ENCODE measurements at regions of chr1 and their contacts with region 1.

Region 1: DNA sequence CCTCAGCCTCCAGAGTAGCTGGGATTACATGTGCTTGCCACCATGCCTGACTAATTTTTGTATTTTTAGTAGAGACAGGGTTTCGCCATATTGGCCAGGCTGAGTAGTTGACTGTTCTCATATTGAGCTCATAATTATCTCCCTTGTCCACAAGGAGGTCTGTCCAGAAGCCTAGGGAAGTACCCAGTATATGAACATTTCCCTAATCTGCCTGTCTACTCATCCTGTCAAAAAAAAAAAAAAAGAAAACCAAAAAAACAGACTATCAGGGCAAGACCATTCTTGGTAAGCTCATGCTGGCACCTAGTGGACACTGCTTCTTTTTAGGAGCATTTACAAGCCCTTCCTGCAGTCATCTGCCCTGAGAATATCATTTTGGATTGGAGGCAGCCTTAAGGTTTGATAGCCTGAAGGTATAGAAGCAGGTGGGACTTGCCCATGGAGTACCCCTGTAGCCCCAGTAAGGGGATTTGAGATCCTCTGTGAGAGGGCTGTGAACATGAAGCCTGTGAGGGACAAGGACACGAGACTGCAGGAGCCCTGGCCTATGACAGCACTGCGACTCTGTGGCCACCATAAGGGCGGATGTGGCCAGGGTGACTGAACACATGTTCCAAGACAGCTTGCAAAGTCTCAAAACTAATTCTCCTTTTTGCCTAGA is 10.8 kb upstream of the DUSP12 start:
- DNase-seq: peak; percentile 88
- ATAC-seq: peak; percentile 69
- H3K4me3 ChIP-seq: no peak overlapping the region
- H3K27ac ChIP-seq: no peak overlapping the region
- H3K4me1 ChIP-seq: peaks cover 5% of the 10 kb centered on the region
- H3K27me3 ChIP-seq: no peaks in the 10 kb centered on the region
- CTCF ChIP-seq: peak; percentile 77
- POLR2A ChIP-seq: no peak
- RAD21 ChIP-seq: peak; percentile 89

Region 2: GRCh38 chr1:161486806-161487741 is 251.7 kb before region 1 on chr1:
- CTCF ChIA-PET with region 1: interaction called, 5 read pairs
- POLR2A ChIA-PET with region 1: no interaction called
- dilution Hi-C with region 1: no loop called
- in situ Hi-C with region 1: loop called (anchors 10 kb)
- intact Hi-C with region 1: loop called (anchors 1 kb)
- DNase-seq: peak; percentile 74
- ATAC-seq: peak; percentile 70
- H3K4me3 ChIP-seq: peak overlapping the region; percentile 37; the same call in 1 of the 2 replicates
- H3K27ac ChIP-seq: no peak overlapping the region
- H3K4me1 ChIP-seq: peaks cover 2% of the 10 kb centered on the region; the same call in 1 of the 2 replicates
- H3K27me3 ChIP-seq: peaks cover 22% of the 10 kb centered on the region
- CTCF ChIP-seq: peak; percentile 77
- POLR2A ChIP-seq: no peak
- RAD21 ChIP-seq: peak; percentile 68

Region 3: DNA sequence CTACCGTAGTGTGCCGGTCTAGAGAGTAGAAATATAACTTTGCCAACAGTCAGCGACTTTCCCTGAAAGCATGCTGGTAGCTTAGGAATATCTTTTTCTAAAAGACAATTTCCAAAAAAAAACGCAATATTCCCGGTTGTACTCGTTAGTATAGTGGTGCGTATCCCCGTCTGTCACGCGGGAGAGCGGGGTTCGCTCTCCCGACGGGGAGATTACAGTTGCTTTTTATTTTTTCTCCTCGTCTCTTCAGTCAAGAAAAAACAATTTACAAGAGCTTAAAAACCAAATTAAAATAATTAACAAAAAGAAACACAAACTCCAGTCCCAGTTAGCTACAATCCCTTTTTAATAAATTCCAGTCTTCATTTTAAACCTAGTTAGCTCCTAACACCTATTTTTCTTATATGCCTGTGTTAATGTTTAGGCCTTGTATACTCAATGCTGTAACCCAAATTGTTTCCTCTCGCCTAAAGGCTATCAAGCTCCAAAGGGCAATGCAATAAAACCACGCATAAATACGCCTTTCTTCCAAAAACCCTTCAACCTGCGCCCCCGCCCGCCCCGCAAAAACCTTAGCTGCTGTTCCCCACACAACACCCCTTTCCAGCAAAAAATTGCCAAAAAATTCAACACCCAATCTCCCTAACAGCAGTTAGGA is 206.6 kb before region 1 on chr1:
- CTCF ChIA-PET with region 1: interaction called, 10 read pairs
- POLR2A ChIA-PET with region 1: no interaction called
- dilution Hi-C with region 1: no loop called
- in situ Hi-C with region 1: no loop called
- intact Hi-C with region 1: no loop called
- DNase-seq: peak; percentile 41
- ATAC-seq: no peak
- H3K4me3 ChIP-seq: peak overlapping the region; percentile 14; the same call in 1 of the 2 replicates
- H3K27ac ChIP-seq: no peak overlapping the region
- H3K4me1 ChIP-seq: no peaks in the 10 kb centered on the region
- H3K27me3 ChIP-seq: no peaks in the 10 kb centered on the region
- CTCF ChIP-seq: no peak
- POLR2A ChIP-seq: no peak
- RAD21 ChIP-seq: no peak

Region 4: DNA sequence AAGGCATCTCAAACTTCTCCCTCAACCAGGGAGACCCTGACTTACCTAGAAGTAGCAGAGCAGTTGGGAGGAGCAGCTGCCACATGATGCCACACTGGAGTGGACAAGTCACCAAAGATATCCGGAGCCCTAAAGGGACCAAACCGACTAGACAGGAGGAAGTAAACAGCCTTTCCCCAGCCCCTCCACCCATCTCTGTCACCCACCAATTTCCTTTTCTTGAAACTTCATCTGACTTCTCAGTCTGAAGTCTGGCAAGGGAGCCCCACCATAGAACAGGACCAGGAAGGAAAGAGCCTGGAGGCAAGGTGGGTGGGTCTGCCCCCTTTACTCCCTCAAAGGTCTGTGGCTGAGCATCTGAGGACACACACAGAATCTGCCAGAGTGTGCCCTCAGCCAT is 189.1 kb before region 1 on chr1 and contains the start of gene FCGR3A:
- CTCF ChIA-PET with region 1: no interaction called
- POLR2A ChIA-PET with region 1: no interaction called
- dilution Hi-C with region 1: no loop called
- in situ Hi-C with region 1: loop called (anchors 10 kb)
- intact Hi-C with region 1: no loop called
- DNase-seq: no peak
- ATAC-seq: no peak
- H3K4me3 ChIP-seq: no peak within 1 kb of the TSS
- H3K27ac ChIP-seq: no peak within 1 kb of the TSS
- H3K4me1 ChIP-seq: no peaks in the 10 kb centered on the region
- H3K27me3 ChIP-seq: peaks cover 2% of the 10 kb centered on the region; the same call in 1 of the 2 replicates
- CTCF ChIP-seq: no peak
- POLR2A ChIP-seq: no peak
- RAD21 ChIP-seq: no peak
- total RNA-seq, gene FCGR3A: not detected in 2 replicates

Region 5: DNA sequence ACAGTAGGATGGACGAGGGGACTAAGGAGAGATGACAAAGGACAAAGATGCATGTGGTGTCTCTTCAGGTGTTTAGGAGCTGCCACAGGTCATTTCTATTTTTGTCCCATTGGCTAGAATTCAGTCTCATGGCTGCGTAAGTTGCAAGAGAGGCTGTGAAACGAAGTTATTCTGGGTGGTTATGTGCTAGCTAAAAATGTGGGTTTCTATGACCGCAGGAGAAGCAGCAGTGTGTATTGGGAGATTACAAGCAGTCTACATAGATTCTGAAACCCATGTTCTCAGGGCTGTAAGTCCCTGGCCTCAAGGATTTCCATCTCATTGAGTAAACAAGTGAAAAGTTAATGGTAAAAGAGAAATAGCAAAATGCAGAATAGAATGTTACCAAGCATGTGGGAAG is 527.2 kb after region 1 on chr1:
- CTCF ChIA-PET with region 1: no interaction called
- POLR2A ChIA-PET with region 1: no interaction called
- dilution Hi-C with region 1: no loop called
- in situ Hi-C with region 1: no loop called
- intact Hi-C with region 1: no loop called
- DNase-seq: no peak
- ATAC-seq: no peak
- H3K4me3 ChIP-seq: no peak overlapping the region
- H3K27ac ChIP-seq: no peak overlapping the region
- H3K4me1 ChIP-seq: no peaks in the 10 kb centered on the region
- H3K27me3 ChIP-seq: peaks cover 1% of the 10 kb centered on the region; the same call in 1 of the 2 replicates
- CTCF ChIP-seq: no peak
- POLR2A ChIP-seq: no peak
- RAD21 ChIP-seq: no peak

Measured in IMR-90 (cell line).